ENCODE measurements at regions of chr3 and their contacts with region 1.

Region 1: GRCh38 chr3:147812186-147812911 is 403.2 kb downstream of the ZIC1 start:
- DNase-seq: no peak
- ATAC-seq: no peak
- H3K4me3 ChIP-seq: no peak overlapping the region
- H3K27ac ChIP-seq: no peak overlapping the region
- H3K4me1 ChIP-seq: no peaks in the 10 kb centered on the region
- H3K27me3 ChIP-seq: no peaks in the 10 kb centered on the region
- CTCF ChIP-seq: no peak
- POLR2A ChIP-seq: no peak
- RAD21 ChIP-seq: no peak

Region 2: DNA sequence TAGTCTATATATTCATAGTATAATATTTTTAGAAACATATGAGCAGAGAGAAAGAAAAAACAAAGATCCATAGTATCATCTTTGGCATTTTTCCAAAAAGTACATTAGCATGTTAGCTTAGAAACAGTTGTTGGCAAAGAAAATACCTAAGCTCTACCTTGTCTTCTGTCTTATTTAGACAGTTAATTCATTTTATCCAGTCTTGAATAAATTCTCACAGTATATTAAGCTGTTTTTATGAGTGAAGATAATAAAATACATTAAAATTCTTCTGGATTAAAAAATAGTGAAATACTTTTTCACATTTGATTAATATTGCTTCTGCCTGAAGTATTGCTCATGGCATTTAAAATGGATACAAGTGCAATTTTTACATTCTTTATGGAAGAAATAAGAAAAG is 258.0 kb before region 1 on chr3:
- CTCF ChIA-PET with region 1: no interaction called
- POLR2A ChIA-PET with region 1: no interaction called
- dilution Hi-C with region 1: no loop called
- in situ Hi-C with region 1: no loop called
- intact Hi-C with region 1: no loop called
- DNase-seq: no peak
- ATAC-seq: no peak
- H3K4me3 ChIP-seq: no peak overlapping the region
- H3K27ac ChIP-seq: no peak overlapping the region
- H3K4me1 ChIP-seq: no peaks in the 10 kb centered on the region
- H3K27me3 ChIP-seq: no peaks in the 10 kb centered on the region
- CTCF ChIP-seq: no peak
- POLR2A ChIP-seq: no peak
- RAD21 ChIP-seq: no peak

Region 3: DNA sequence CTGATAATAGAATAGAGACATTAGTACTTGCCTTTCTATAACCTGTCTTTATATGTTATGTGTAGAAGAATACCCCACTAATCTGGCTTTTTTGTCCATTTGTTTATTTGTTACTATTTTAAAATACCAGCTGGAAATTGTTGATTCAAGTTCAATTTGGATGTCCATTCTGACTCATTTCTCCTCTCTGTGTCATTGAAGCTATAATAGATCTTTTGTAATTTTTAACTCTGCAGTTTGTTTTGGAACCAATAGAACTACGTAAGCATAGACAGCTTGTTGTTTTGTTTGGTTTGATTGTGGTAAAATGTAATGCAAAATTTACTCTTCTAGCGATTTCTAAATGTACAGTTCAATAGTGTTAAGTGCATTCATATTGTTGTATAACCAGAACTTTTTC is 12.7 kb before region 1 on chr3:
- CTCF ChIA-PET with region 1: interaction called, 10 read pairs
- POLR2A ChIA-PET with region 1: no interaction called
- dilution Hi-C with region 1: no loop called
- in situ Hi-C with region 1: no loop called
- intact Hi-C with region 1: no loop called
- DNase-seq: no peak
- ATAC-seq: no peak
- H3K4me3 ChIP-seq: no peak overlapping the region
- H3K27ac ChIP-seq: no peak overlapping the region
- H3K4me1 ChIP-seq: no peaks in the 10 kb centered on the region
- H3K27me3 ChIP-seq: no peaks in the 10 kb centered on the region
- CTCF ChIP-seq: no peak
- POLR2A ChIP-seq: no peak
- RAD21 ChIP-seq: no peak

Measured in IMR-90 (cell line).